Posterior cingulate gyrus (tissue), 11 donors: ENCODE measurements at regions of chr7 and their contacts with region 1.

Region 1: DNA sequence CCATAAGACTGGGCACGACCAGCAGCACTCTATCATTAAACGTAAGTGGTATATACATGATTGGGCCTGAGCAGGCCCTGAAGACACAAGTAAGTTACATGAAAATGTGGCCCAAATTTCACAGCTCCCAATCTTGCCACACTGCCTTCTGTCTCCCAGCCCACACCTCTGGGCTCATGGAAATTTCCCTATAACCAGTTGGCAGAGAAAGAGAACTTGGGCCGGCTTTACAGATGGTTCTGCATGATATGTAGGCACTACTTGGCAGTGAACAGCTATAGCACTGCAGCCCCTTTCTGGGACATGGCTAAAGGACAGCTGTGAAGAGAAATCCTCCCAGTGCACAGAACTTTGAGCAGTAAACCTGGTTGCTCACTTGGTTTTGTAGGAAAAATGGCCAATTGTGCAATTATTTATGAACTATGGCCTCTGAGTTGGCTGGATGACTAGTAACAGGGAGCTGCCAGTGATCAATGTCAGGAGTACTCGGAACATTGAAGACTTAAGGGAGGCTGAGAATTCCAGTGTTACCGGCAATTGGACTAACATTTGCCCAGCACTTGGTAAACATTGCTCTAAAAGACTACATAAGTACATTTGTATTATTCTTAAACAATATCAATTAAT is 1006.6 kb upstream of the LRRN3 start:
- DNase-seq: peak in 8 of 10 donors; percentile 27 to 88 (median 44)

Region 2: GRCh38 chr7:109206196-109206595 is 878.1 kb before region 1 on chr7:
- intact Hi-C with region 1: no loop called
- DNase-seq: no peak

Region 3: GRCh38 chr7:110017412-110017811 is 66.9 kb before region 1 on chr7:
- intact Hi-C with region 1: no loop called
- DNase-seq: no peak

Region 4: DNA sequence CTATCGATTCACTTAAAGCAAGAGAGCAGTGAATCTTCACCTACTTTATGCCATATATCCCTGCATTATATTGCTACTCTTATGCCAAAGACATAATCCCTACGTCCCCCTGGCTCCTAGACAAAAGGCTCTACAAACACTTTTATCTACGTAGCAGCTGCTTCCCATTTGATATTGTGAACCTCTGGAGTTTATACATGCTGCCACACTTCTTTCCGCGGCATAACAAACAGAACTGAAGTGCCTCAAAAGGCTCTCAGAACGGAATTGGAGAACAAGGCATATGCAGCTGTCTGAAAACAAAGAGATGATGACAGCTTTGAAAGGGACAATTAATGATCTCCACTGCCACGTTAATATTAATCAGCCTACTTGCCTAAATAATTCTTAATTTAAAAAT is 21.0 kb after region 1 on chr7:
- intact Hi-C with region 1: loop called (anchors 2 kb)
- DNase-seq: no peak